ENCODE measurements at regions of chr19 and their contacts with region 1.

Region 1: GRCh38 chr19:48646001-48646721 is at the start of gene CA11:
- DNase-seq: no peak
- ATAC-seq: peak; percentile 93
- H3K4me3 ChIP-seq: peak within 1 kb of the TSS; percentile 91
- H3K27ac ChIP-seq: peak within 1 kb of the TSS; percentile 15; the same call in 1 of the 2 replicates
- H3K4me1 ChIP-seq: peaks cover 20% of the 10 kb centered on the region
- H3K27me3 ChIP-seq: no peaks in the 10 kb centered on the region
- CTCF ChIP-seq: peak; percentile 79 to 98 (median 96); a peak in 5 of 6 replicates
- EP300 ChIP-seq: no peak
- POLR2A ChIP-seq: peak; percentile 40; the same call in 1 of the 2 replicates
- RAD21 ChIP-seq: peak; percentile 97
- polyA plus RNA-seq, gene CA11: 5.4 to 7.5 TPM

Region 2: DNA sequence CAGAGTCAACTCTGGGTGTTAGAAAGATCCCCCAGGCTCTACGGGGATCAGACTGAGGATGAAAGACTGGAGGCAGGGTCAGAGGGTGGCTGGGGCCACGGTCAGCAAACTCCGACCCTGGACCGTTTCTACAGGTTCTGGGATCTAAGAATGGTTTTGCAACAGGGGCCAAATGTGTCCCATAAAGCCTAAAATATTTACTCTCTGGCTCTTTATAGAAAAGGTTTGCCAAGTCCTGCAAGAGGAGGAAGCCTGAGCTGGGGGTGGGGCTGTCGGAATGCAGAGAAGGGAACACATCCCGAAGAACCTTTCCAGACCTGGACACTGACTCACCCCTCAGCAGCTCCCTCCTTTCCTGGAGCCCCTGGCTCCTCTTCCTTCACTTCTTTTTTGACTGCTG is 496.7 kb before region 1 on chr19:
- CTCF ChIA-PET with region 1: no interaction called
- POLR2A ChIA-PET with region 1: no interaction called
- RAD21 ChIA-PET with region 1: no interaction called
- SMC1A ChIA-PET with region 1: no interaction called
- in situ Hi-C with region 1: no loop called
- intact Hi-C with region 1: no loop called
- DNase-seq: no peak
- ATAC-seq: no peak
- H3K4me3 ChIP-seq: no peak overlapping the region
- H3K27ac ChIP-seq: no peak overlapping the region
- H3K4me1 ChIP-seq: no peaks in the 10 kb centered on the region
- H3K27me3 ChIP-seq: no peaks in the 10 kb centered on the region
- CTCF ChIP-seq: no peak
- EP300 ChIP-seq: no peak
- POLR2A ChIP-seq: no peak
- RAD21 ChIP-seq: no peak

Region 3: DNA sequence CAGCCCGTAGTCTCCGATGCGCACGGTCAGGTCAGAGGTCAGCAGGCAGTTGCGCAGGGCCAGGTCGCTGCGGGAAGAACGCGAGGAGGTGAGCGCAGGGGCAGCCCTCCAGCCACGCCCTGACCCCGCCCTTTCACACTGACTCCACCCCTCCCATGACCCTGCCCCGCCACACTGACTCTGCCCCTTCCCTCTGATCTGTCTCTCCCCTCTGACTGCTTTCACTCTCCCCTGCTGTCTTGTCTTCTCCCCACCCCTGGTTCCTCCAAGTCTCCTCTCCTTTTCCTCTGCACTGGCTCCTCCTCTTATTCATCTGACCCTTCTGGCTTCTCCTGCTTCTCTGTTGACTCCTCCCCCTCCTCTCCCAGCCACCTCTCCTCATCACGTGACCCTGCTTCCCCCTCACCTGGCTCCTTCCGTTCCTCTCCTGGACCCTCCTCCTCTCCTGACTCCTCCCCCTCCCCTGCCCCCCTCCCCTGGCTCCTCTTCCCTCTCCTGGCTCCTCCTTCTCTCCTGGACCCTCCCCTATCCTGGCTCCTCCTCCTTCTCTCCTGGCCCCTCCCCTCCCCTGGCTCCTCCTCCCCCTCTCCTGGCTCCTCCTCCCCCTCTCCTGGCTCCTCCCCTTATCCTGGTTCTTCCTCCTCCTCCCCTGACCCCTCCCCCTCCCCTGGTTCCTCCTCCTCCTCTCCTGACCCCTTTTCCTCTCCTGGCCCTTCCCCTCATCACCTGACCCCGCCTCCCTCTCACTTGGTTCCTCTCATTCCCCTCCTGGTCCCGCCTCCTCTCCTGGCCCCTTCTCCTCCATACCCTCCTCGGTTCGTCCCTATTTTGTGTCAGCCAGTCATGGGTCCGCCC is 144.4 kb before region 1 on chr19:
- CTCF ChIA-PET with region 1: no interaction called
- POLR2A ChIA-PET with region 1: no interaction called
- RAD21 ChIA-PET with region 1: no interaction called
- SMC1A ChIA-PET with region 1: no interaction called
- in situ Hi-C with region 1: no loop called
- intact Hi-C with region 1: no loop called
- DNase-seq: peak; percentile 59
- ATAC-seq: peak; percentile 85
- H3K4me3 ChIP-seq: peak overlapping the region; percentile 53; the same call in 1 of the 2 replicates
- H3K27ac ChIP-seq: no peak overlapping the region
- H3K4me1 ChIP-seq: peaks cover 4% of the 10 kb centered on the region; the same call in 1 of the 2 replicates
- H3K27me3 ChIP-seq: no peaks in the 10 kb centered on the region
- CTCF ChIP-seq: no peak
- EP300 ChIP-seq: no peak
- POLR2A ChIP-seq: no peak
- RAD21 ChIP-seq: no peak

Region 4: DNA sequence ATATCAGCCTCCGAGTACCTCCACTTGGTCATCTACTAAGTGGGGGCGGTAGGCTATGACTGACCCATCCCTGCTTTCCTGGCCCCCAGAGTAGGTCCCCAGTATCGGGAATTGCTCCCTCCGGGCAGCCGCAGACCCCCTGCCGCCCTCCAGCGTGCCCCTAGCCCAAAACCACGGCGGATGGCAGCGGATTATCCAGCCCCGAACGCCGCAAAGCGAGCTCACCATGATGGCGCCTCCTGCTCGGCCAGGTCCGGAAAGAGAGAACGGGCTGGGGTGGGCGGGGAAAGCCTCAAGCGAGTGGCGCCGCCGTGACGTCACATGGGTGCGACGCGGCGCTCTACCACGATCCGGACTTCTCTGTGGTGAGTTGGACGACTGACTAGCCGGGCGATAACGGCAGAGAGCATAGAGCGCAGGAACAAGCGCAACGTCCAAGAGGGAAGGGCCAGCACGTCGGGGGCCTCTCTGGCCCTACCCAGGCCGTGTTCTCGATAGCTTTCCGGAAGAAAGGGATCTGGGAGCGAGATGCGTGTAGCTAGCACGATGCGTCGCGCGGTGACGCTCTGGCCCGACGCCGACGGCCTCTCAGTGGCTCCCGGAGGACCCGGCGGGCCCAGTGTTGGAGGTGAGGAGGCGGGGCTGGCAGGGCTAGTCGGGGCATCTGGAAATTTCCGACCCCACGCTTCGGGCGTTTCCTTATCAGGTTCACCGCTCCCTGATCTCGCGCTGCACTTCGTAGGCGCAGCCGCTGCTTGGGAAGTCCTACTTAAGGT is 27.1 kb before region 1 on chr19 and contains the starts of genes RPL18 and SPHK2:
- CTCF ChIA-PET with region 1: interaction called, 6 read pairs
- POLR2A ChIA-PET with region 1: interaction called, 10 read pairs
- RAD21 ChIA-PET with region 1: interaction called, 6 read pairs
- SMC1A ChIA-PET with region 1: interaction called, 3 read pairs
- in situ Hi-C with region 1: no loop called
- intact Hi-C with region 1: no loop called
- DNase-seq: peak; percentile 98
- ATAC-seq: peak; percentile 85
- H3K4me3 ChIP-seq: peak within 1 kb of the TSS; percentile 99
- H3K27ac ChIP-seq: peak within 1 kb of the TSS; percentile 95
- H3K4me1 ChIP-seq: peaks cover 24% of the 10 kb centered on the region
- H3K27me3 ChIP-seq: no peaks in the 10 kb centered on the region
- CTCF ChIP-seq: no peak; a peak in 1 of 6 replicates
- EP300 ChIP-seq: no peak
- POLR2A ChIP-seq: peak; percentile 99
- RAD21 ChIP-seq: no peak
- polyA plus RNA-seq, gene RPL18: 393 to 844 TPM
- polyA plus RNA-seq, gene SPHK2: 0.37 to 0.75 TPM

Region 5: DNA sequence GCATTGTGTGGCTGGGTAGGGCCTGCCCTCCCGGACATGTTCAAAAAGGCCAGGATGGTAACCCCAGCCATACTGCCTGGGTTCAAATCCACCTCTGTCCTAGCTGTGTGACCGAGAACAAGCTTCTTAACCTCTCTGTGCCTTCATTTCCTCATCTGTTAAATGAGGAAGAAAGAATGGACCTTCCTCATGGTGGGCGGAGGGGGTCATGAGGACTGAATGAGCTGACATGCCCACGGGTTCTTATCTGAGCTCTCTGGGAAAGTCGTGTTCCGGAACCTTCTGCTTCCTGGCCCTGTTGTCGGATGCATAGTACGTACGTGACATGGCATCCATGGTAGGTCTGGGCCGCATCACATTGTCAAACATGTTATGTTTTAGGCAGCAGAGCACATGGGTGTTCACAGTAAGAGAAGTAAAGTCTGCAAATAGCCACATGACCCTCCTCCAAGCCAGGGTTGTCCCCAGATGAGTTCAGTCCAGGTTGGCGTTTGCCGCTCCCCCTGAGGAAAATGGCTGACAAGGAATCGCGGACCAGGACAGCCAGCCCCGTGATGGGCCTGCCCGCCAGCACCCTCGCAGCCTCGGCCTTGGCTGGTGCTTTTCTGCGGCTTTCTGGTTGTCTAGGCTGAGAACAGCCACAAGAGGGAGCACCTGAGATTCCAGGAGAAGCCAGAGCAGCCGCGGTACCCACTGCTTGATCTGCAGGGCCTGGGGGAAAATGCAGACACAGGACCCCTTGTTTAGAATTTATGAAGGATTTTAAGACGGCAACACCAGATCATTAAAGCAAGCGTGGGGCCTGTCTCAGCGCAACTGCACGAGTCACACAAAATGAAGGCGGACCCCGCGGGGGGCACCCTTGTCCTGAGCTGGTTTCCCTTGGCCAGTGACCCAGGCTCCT is 29.0 kb after region 1 on chr19:
- CTCF ChIA-PET with region 1: interaction called, 14 read pairs
- POLR2A ChIA-PET with region 1: interaction called, 4 read pairs
- RAD21 ChIA-PET with region 1: interaction called, 7 read pairs
- SMC1A ChIA-PET with region 1: interaction called, 11 read pairs
- in situ Hi-C with region 1: no loop called
- intact Hi-C with region 1: loop called (anchors 1 kb)
- DNase-seq: no peak
- ATAC-seq: peak; percentile 95
- H3K4me3 ChIP-seq: no peak overlapping the region
- H3K27ac ChIP-seq: no peak overlapping the region
- H3K4me1 ChIP-seq: no peaks in the 10 kb centered on the region
- H3K27me3 ChIP-seq: peaks cover 0 to 2% of the 10 kb centered on the region in 2 experiments; a peak in 2 of 4 replicates
- CTCF ChIP-seq: peak; percentile 81 to 89 (median 85)
- EP300 ChIP-seq: no peak
- POLR2A ChIP-seq: no peak
- RAD21 ChIP-seq: peak; percentile 64

Region 6: DNA sequence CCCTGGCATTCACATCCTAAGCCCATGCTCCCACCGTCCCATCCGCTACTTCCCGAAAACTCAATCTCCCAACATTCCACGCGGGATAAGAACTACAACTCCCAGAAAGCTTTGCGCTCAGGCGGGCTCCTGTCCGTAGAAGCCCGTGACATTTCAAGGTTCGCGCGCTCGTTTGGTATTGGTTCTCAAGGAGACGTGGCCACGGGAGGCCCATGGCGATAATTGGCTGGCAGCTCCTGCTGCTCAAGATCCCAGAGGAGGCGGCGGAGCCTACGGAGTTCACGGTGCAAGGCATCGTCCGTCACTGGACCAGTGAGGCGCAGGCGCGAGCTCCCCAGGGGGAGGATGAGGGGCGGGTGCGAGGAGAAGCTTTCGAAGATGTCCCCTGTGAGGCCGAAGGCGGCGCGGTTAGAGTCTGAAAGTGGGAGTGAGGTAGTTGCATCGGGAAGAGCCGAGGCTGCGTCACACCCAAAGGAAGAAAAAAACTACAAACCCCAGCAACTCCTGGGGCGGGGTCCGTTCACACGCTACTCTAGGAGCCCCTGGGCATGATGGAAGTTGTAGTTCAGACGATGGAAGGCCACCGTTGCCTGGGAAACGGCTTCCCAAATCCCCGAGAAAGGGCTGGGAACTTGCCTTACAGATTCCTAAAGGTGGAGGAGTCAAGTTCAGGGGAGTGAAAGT is 74.6 kb after region 1 on chr19:
- CTCF ChIA-PET with region 1: interaction called, 4 read pairs
- POLR2A ChIA-PET with region 1: interaction called, 5 read pairs
- RAD21 ChIA-PET with region 1: interaction called, 10 read pairs
- SMC1A ChIA-PET with region 1: interaction called, 3 read pairs
- in situ Hi-C with region 1: no loop called
- intact Hi-C with region 1: no loop called
- DNase-seq: peak; percentile 90
- ATAC-seq: peak; percentile 99
- H3K4me3 ChIP-seq: peak overlapping the region; percentile 59
- H3K27ac ChIP-seq: peak overlapping the region; percentile 75
- H3K4me1 ChIP-seq: peaks cover 4% of the 10 kb centered on the region
- H3K27me3 ChIP-seq: no peaks in the 10 kb centered on the region
- CTCF ChIP-seq: no peak
- EP300 ChIP-seq: no peak
- POLR2A ChIP-seq: peak; percentile 80
- RAD21 ChIP-seq: no peak

Region 7: DNA sequence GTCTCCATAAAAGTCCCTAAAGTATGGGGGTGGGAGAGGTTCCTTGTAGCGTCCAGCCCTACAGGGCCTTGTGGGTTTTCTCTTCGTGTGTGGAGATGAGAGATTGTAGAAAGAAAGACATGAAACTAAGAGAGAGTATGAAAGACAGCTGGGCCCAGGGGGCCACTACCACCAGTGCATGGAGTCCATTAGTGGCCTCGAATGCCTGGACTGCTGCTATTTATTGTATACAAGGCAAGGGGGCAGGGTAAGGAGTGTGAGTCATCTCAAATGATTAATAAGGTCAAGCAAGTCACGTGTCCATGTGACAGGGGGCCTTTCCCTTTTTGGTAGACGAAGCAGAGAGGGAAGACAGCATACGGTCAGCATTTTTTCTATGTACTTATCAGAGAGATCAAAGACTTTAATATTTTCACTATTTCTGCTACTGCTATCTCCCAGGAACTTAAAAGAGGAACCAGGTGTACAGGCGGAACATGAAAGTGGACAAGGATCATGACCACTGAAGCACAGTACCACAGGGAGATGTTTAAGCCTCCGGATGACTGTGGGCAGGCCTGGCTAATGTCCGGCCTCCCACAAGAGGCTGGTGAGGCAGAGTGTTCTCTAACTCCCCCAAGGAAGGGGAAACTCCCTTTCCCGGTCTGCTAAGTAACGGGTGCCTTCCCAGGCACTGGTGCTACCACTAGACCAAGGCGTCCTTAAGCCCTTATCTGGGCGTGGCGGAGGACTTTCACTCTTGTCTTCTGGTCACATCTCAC is 134.7 kb after region 1 on chr19:
- CTCF ChIA-PET with region 1: interaction called, 12 read pairs
- POLR2A ChIA-PET with region 1: no interaction called
- RAD21 ChIA-PET with region 1: interaction called, 6 read pairs
- SMC1A ChIA-PET with region 1: interaction called, 6 read pairs
- in situ Hi-C with region 1: no loop called
- intact Hi-C with region 1: no loop called
- DNase-seq: peak; percentile 54
- ATAC-seq: peak; percentile 71
- H3K4me3 ChIP-seq: no peak overlapping the region
- H3K27ac ChIP-seq: no peak overlapping the region
- H3K4me1 ChIP-seq: peaks cover 3% of the 10 kb centered on the region; the same call in 1 of the 2 replicates
- H3K27me3 ChIP-seq: no peaks in the 10 kb centered on the region
- CTCF ChIP-seq: no peak
- EP300 ChIP-seq: no peak
- POLR2A ChIP-seq: no peak
- RAD21 ChIP-seq: no peak

Region 8: GRCh38 chr19:48835734-48836088 is 189.6 kb after region 1 on chr19:
- CTCF ChIA-PET with region 1: interaction called, 6 read pairs
- POLR2A ChIA-PET with region 1: no interaction called
- RAD21 ChIA-PET with region 1: interaction called, 11 read pairs
- SMC1A ChIA-PET with region 1: no interaction called
- in situ Hi-C with region 1: loop called (anchors 5 kb)
- intact Hi-C with region 1: loop called (anchors 5 kb)
- DNase-seq: peak; percentile 82
- ATAC-seq: peak; percentile 97
- H3K4me3 ChIP-seq: peak overlapping the region; percentile 72
- H3K27ac ChIP-seq: 0 out of 2 replicates have a peak overlapping the region, but pooled peaks have one; percentile 14
- H3K4me1 ChIP-seq: peaks cover 15% of the 10 kb centered on the region
- H3K27me3 ChIP-seq: no peaks in the 10 kb centered on the region
- CTCF ChIP-seq: peak; percentile 92 to 98 (median 95)
- EP300 ChIP-seq: no peak
- POLR2A ChIP-seq: peak; percentile 68; the same call in 1 of the 2 replicates
- RAD21 ChIP-seq: peak; percentile 93